ENCODE measurements at regions of chr7 and their contacts with region 1.

Region 1: GRCh38 chr7:106176414-106177299 is 64.5 kb upstream of the SYPL1 start:
- DNase-seq: peak; percentile 51
- ATAC-seq: peak; percentile 92
- H3K4me3 ChIP-seq: no peak overlapping the region
- H3K27ac ChIP-seq: no peak overlapping the region
- H3K4me1 ChIP-seq: peaks cover 0 to 9% of the 10 kb centered on the region in 2 experiments; a peak in 2 of 4 replicates
- H3K27me3 ChIP-seq: no peaks in the 10 kb centered on the region
- CTCF ChIP-seq: peak; percentile 91 to 96 (median 96)
- POLR2A ChIP-seq: no peak
- RAD21 ChIP-seq: peak; percentile 98

Region 2: GRCh38 chr7:106285051-106285854 is 108.6 kb after region 1 on chr7:
- CTCF ChIA-PET with region 1: no interaction called
- POLR2A ChIA-PET with region 1: no interaction called
- RAD21 ChIA-PET with region 1: interaction called in 1 of 2 experiments, 6 read pairs
- intact Hi-C with region 1: loop called (anchors 5 kb)
- DNase-seq: peak; percentile 96
- ATAC-seq: peak; percentile 88
- H3K4me3 ChIP-seq: peak overlapping the region; percentile 77 to 83
- H3K27ac ChIP-seq: peak overlapping the region; percentile 80
- H3K4me1 ChIP-seq: peaks cover 13 to 45% of the 10 kb centered on the region in 2 experiments; a peak in 3 of 4 replicates
- H3K27me3 ChIP-seq: no peaks in the 10 kb centered on the region
- CTCF ChIP-seq: no peak
- POLR2A ChIP-seq: peak; percentile 70
- RAD21 ChIP-seq: 0 out of 2 replicates have a peak, but pooled peaks have one; percentile 13

Region 3: DNA sequence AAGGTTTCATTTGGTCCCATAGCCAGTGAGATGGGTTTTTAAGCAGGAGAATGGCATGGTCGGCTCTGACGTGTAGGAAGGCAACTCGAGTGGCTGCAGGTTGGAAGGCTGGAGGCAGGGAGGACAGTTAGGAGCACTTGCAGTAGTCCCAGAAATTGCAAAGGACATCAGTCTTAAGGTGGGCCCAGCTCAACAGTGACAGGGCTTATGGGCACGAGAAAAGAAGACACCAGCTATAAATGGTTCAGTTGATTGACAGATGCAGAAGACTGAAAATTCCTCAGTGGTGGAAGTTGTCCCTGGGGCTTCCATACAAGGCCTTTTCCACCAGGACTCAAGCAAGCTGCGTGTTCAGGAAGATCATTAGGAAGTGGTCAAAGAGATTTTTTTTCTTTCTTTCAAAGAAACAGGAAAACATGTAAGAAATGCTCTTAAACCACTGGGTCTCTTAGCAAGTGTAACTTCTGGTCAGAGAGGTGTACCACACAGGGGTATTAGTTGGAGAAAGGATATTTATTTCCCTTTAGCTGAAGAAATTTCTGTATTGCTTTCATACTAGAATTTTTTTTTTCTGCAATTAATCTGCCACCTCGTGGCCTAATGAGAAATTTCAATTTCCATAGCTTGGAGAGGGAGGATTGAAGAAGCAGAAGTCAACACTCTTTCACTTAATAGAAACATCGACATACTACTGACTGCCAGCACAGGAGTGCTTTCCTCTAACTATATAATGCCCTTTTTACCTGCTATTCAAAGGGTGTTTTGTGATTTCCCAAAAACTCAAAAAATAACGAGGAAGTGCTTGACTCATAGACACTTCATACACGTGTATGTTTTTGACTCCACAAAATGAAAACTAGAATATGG is 285.6 kb after region 1 on chr7:
- CTCF ChIA-PET with region 1: interaction called, 127 read pairs
- POLR2A ChIA-PET with region 1: interaction called, 10 read pairs
- RAD21 ChIA-PET with region 1: interaction called, 25 to 30 read pairs
- intact Hi-C with region 1: loop called (anchors 1 kb)
- DNase-seq: no peak
- ATAC-seq: peak; percentile 67
- H3K4me3 ChIP-seq: no peak overlapping the region
- H3K27ac ChIP-seq: no peak overlapping the region
- H3K4me1 ChIP-seq: peaks cover 11 to 26% of the 10 kb centered on the region in 2 experiments; a peak in 3 of 4 replicates
- H3K27me3 ChIP-seq: no peaks in the 10 kb centered on the region
- CTCF ChIP-seq: peak; percentile 32 to 77 (median 60); a peak in 4 of 6 replicates
- POLR2A ChIP-seq: no peak
- RAD21 ChIP-seq: peak; percentile 84

Region 4: GRCh38 chr7:106542550-106543220 is 366.0 kb after region 1 on chr7:
- CTCF ChIA-PET with region 1: interaction called, 6 read pairs
- POLR2A ChIA-PET with region 1: no interaction called
- RAD21 ChIA-PET with region 1: interaction called, 6 to 7 read pairs
- intact Hi-C with region 1: loop called (anchors 5 kb)
- DNase-seq: peak; percentile 77
- ATAC-seq: peak; percentile 97
- H3K4me3 ChIP-seq: no peak overlapping the region
- H3K27ac ChIP-seq: no peak overlapping the region
- H3K4me1 ChIP-seq: peaks cover 0 to 14% of the 10 kb centered on the region in 2 experiments; a peak in 3 of 4 replicates
- H3K27me3 ChIP-seq: no peaks in the 10 kb centered on the region
- CTCF ChIP-seq: peak; percentile 68 to 96 (median 80)
- POLR2A ChIP-seq: no peak
- RAD21 ChIP-seq: peak; percentile 91

Region 5: GRCh38 chr7:106736508-106737201 is 560.0 kb after region 1 on chr7:
- CTCF ChIA-PET with region 1: interaction called, 22 read pairs
- POLR2A ChIA-PET with region 1: no interaction called
- RAD21 ChIA-PET with region 1: interaction called, 3 to 5 read pairs
- intact Hi-C with region 1: loop called (anchors 1 kb)
- DNase-seq: peak; percentile 73
- ATAC-seq: peak; percentile 98
- H3K4me3 ChIP-seq: peak overlapping the region in 1 of 2 experiments; percentile 17; a peak in 1 of 4 replicates
- H3K27ac ChIP-seq: peak overlapping the region; percentile 30
- H3K4me1 ChIP-seq: peaks cover 0 to 12% of the 10 kb centered on the region in 2 experiments; a peak in 2 of 4 replicates
- H3K27me3 ChIP-seq: no peaks in the 10 kb centered on the region
- CTCF ChIP-seq: peak; percentile 71 to 97 (median 82)
- POLR2A ChIP-seq: no peak
- RAD21 ChIP-seq: peak; percentile 95

Region 6: DNA sequence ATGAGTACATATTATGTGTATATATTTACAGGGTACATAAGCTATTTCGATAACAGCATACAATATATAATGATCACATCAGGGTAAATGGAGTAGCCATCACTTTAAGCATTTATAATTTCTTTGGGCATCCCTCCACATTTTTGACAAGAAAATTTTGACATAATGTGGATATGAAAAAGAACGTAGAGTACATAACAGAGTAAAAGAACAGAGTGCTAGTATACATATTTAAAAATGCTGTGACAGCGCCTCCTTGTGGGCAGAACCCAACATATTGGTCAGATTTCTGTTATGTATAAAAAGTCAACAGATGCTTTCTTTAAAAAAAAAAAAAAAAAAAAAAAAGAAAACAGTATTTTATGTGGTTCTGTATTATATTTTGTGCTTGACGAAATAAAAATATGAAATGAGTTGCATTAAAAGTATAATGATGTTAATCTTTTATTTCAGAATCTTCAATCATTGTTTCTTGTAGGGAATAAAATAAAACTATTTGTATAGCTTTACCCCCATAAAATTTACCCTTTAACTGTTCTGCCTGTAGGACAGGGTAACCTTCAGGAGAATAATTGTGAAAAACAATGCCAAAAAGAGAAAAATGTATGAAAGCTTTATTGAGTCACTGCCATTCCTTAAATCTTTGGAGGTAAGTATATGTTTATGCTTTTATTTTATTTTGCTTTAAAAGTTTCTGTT is 973.9 kb after region 1 on chr7:
- CTCF ChIA-PET with region 1: interaction called, 6 read pairs
- POLR2A ChIA-PET with region 1: no interaction called
- RAD21 ChIA-PET with region 1: no interaction called
- intact Hi-C with region 1: loop called (anchors 5 kb)
- DNase-seq: peak; percentile 51
- ATAC-seq: peak; percentile 53
- H3K4me3 ChIP-seq: no peak overlapping the region
- H3K27ac ChIP-seq: no peak overlapping the region
- H3K4me1 ChIP-seq: peaks cover 2 to 17% of the 10 kb centered on the region in 2 experiments; a peak in 3 of 4 replicates
- H3K27me3 ChIP-seq: no peaks in the 10 kb centered on the region
- CTCF ChIP-seq: peak; percentile 51 to 77 (median 75); a peak in 5 of 6 replicates
- POLR2A ChIP-seq: no peak
- RAD21 ChIP-seq: peak; percentile 75

Measured in HCT116 (cell line).